B cell (primary cell): ENCODE measurements at regions of chr6 and their contacts with region 1.

Region 1: DNA sequence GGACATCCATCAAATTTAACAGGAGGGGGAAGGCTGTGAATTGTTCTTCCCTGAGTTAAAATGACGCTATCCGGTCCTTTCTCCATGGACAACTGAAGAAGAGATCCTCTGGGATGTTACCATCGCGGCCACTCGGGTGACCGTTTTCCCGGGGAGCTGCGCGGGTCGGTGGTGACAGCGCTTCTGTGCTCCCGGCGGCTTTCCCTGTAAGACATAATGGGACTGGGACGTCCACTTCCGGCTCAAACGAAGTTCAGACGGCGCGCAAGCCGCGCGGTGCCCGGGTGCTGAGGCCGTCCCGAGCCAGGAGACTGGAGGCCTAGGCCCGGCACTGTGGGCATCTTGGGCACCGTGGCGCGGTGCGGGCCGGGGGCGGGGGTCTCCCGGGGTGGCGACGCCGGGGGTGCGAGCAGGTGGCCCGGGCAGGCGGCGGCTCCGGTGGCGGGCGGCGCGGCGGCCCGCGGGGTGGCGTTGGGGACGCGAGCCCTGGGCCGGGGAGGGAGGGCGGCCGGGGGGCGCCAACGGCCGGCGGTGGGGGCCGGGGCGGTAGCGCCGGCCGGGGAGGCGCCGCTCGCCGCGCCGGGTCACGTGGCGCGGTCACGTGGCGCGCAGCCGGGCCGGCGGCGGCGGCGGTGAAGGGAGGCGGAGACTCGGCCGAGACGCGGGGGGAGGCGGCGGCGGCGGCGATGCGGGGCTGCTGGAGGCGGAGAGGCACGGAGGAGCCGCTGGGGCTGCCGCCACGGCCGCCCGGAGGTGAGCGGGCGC is 63.6 kb downstream of the GTF2H5 start:
- DNase-seq: peak; percentile 86
- ATAC-seq: peak; percentile 79
- H3K4me3 ChIP-seq: peak overlapping the region; percentile 39 to 91 (median 77)
- H3K4me3 Mint-ChIP-seq: peak overlapping the region; percentile 92
- H3K27ac ChIP-seq: peak overlapping the region; percentile 22 to 81
- H3K27ac Mint-ChIP-seq: peak overlapping the region; percentile 92
- H3K4me1 ChIP-seq: peaks cover 15 to 16% of the 10 kb centered on the region in 2 donors
- H3K4me1 Mint-ChIP-seq: peaks cover 35% of the 10 kb centered on the region
- H3K27me3 ChIP-seq: no peaks in the 10 kb centered on the region
- H3K27me3 Mint-ChIP-seq: no peaks in the 10 kb centered on the region
- CTCF ChIP-seq: no peak

Region 2: GRCh38 chr6:158344534-158344933 is 112.8 kb after region 1 on chr6:
- CTCF ChIA-PET with region 1: no interaction called
- POLR2A ChIA-PET with region 1: no interaction called
- intact Hi-C with region 1: no loop called
- DNase-seq: no peak
- ATAC-seq: no peak
- H3K4me3 ChIP-seq: no peak overlapping the region
- H3K4me3 Mint-ChIP-seq: no peak overlapping the region
- H3K27ac ChIP-seq: no peak overlapping the region
- H3K27ac Mint-ChIP-seq: no peak overlapping the region
- H3K4me1 ChIP-seq: no peaks in the 10 kb centered on the region
- H3K4me1 Mint-ChIP-seq: peaks cover 11% of the 10 kb centered on the region
- H3K27me3 ChIP-seq: no peaks in the 10 kb centered on the region
- H3K27me3 Mint-ChIP-seq: no peaks in the 10 kb centered on the region
- CTCF ChIP-seq: no peak

Region 3: DNA sequence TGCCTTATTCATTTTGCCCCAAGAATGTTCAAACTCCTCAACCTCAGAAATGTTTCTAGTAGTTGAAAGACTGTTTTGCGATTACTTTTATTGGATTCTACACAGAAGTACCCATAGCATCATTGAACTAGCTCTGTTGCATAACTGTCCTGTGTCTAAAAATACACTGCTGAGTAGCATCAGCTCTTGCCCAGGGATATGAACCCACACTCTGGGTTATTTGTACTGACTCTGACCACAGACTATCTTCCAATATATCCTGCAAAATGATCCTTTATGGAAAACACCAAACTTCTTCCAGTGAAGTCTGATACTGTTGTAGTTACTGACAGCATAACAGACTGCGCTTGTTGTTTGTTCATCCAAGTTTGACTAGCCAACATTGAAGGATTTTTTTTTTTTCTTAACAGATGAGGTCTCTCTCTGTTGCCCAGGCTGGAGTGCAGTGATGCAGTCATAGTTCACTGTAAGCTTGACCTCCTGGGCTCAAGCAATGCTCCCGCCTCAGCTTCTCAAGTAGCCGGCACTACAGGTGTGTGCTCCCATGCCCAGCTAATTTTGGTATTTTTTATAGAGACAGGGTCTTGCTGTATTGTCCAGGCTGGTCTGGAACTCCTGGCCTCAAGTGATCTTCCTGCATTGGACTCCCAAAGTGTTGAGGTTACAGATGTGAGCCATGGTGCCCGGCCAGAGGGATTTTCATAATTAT is 130.4 kb after region 1 on chr6:
- CTCF ChIA-PET with region 1: no interaction called
- POLR2A ChIA-PET with region 1: interaction called, 11 read pairs
- intact Hi-C with region 1: no loop called
- DNase-seq: no peak
- ATAC-seq: no peak
- H3K4me3 ChIP-seq: no peak overlapping the region
- H3K4me3 Mint-ChIP-seq: no peak overlapping the region
- H3K27ac ChIP-seq: no peak overlapping the region
- H3K27ac Mint-ChIP-seq: no peak overlapping the region
- H3K4me1 ChIP-seq: no peaks in the 10 kb centered on the region
- H3K4me1 Mint-ChIP-seq: peaks cover 24% of the 10 kb centered on the region
- H3K27me3 ChIP-seq: no peaks in the 10 kb centered on the region
- H3K27me3 Mint-ChIP-seq: no peaks in the 10 kb centered on the region
- CTCF ChIP-seq: no peak